IMR-90 (cell line): ENCODE measurements at regions of chr3 and their contacts with region 1.

Region 1: GRCh38 chr3:120095226-120095978 is 1.2 kb upstream of the GSK3B start:
- DNase-seq: peak; percentile 89
- ATAC-seq: peak; percentile 52
- H3K4me3 ChIP-seq: peak overlapping the region; percentile 66
- H3K27ac ChIP-seq: peak overlapping the region; percentile 94
- H3K4me1 ChIP-seq: peaks cover 5% of the 10 kb centered on the region
- H3K27me3 ChIP-seq: no peaks in the 10 kb centered on the region
- CTCF ChIP-seq: no peak
- POLR2A ChIP-seq: peak; percentile 94
- RAD21 ChIP-seq: no peak

Region 2: DNA sequence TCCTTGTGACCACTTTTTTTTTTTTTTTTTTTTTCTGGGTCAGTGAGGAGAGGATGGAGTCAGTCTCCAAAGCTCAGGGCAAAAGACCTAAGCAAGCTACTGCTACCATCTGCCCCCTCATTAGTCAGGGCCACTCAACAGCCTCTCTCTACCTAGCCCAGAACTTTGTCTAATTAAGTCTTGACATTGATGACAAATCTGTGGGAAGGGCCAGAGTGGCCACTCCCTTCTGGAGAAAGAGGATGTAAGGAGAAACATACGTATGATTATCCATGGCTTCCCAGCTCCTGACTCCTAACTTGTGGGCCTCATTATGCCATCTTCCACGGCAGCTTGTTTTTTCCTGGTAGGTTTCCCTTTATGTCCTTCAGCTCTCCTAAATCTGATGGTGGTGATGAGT is 275.6 kb before region 1 on chr3:
- CTCF ChIA-PET with region 1: no interaction called
- POLR2A ChIA-PET with region 1: no interaction called
- dilution Hi-C with region 1: no loop called
- in situ Hi-C with region 1: no loop called
- intact Hi-C with region 1: loop called (anchors 5 kb)
- DNase-seq: peak; percentile 6
- ATAC-seq: no peak
- H3K4me3 ChIP-seq: no peak overlapping the region
- H3K27ac ChIP-seq: no peak overlapping the region
- H3K4me1 ChIP-seq: no peaks in the 10 kb centered on the region
- H3K27me3 ChIP-seq: peaks cover 18% of the 10 kb centered on the region; the same call in 1 of the 2 replicates
- CTCF ChIP-seq: no peak
- POLR2A ChIP-seq: no peak
- RAD21 ChIP-seq: no peak

Region 3: GRCh38 chr3:120170223-120170622 is 74.8 kb after region 1 on chr3:
- CTCF ChIA-PET with region 1: no interaction called
- POLR2A ChIA-PET with region 1: interaction called, 8 read pairs
- dilution Hi-C with region 1: no loop called
- in situ Hi-C with region 1: loop called (anchors 5 kb)
- intact Hi-C with region 1: no loop called
- DNase-seq: peak; percentile 85
- ATAC-seq: peak; percentile 71
- H3K4me3 ChIP-seq: no peak overlapping the region
- H3K27ac ChIP-seq: no peak overlapping the region
- H3K4me1 ChIP-seq: peaks cover 26% of the 10 kb centered on the region
- H3K27me3 ChIP-seq: no peaks in the 10 kb centered on the region
- CTCF ChIP-seq: no peak
- POLR2A ChIP-seq: no peak
- RAD21 ChIP-seq: no peak

Region 4: GRCh38 chr3:120182724-120183524 is 87.5 kb after region 1 on chr3:
- CTCF ChIA-PET with region 1: interaction called, 3 read pairs
- POLR2A ChIA-PET with region 1: interaction called, 11 read pairs
- dilution Hi-C with region 1: no loop called
- in situ Hi-C with region 1: no loop called
- intact Hi-C with region 1: loop called (anchors 1 kb)
- DNase-seq: peak; percentile 62
- ATAC-seq: peak; percentile 80
- H3K4me3 ChIP-seq: no peak overlapping the region
- H3K27ac ChIP-seq: no peak overlapping the region
- H3K4me1 ChIP-seq: peaks cover 3% of the 10 kb centered on the region
- H3K27me3 ChIP-seq: no peaks in the 10 kb centered on the region
- CTCF ChIP-seq: peak; percentile 77
- POLR2A ChIP-seq: no peak
- RAD21 ChIP-seq: peak; percentile 86

Region 5: GRCh38 chr3:120399372-120399771 is 304.0 kb after region 1 on chr3:
- CTCF ChIA-PET with region 1: no interaction called
- POLR2A ChIA-PET with region 1: no interaction called
- dilution Hi-C with region 1: no loop called
- in situ Hi-C with region 1: no loop called
- intact Hi-C with region 1: loop called (anchors 10 kb)
- DNase-seq: no peak
- ATAC-seq: no peak
- H3K4me3 ChIP-seq: no peak overlapping the region
- H3K27ac ChIP-seq: no peak overlapping the region
- H3K4me1 ChIP-seq: no peaks in the 10 kb centered on the region
- H3K27me3 ChIP-seq: no peaks in the 10 kb centered on the region
- CTCF ChIP-seq: no peak
- POLR2A ChIP-seq: no peak
- RAD21 ChIP-seq: no peak